Ovary (tissue), 10 donors: ENCODE measurements at regions of chr1 and their contacts with region 1.

Region 1: GRCh38 chr1:39102537-39103327 is 76.6 kb downstream of the NDUFS5 start:
- DNase-seq: peak in 2 of 5 donors; percentile 27 to 49
- H3K4me3 ChIP-seq: no peak overlapping the region
- H3K27ac ChIP-seq: no peak overlapping the region
- H3K4me1 ChIP-seq: peaks cover 9% of the 10 kb centered on the region
- H3K27me3 ChIP-seq: no peaks in the 10 kb centered on the region
- CTCF ChIP-seq: peak; percentile 53 to 91 (median 89)
- EP300 ChIP-seq: no peak
- POLR2A ChIP-seq: no peak

Region 2: GRCh38 chr1:38990738-38991639 is 111.7 kb before region 1 on chr1 and contains the start of gene AKIRIN1:
- intact Hi-C with region 1: no loop called
- DNase-seq: peak; percentile 98 to 99 (median 99)
- H3K4me3 ChIP-seq: peak within 1 kb of the TSS; percentile 99
- H3K27ac ChIP-seq: peak within 1 kb of the TSS; percentile 68 to 83
- H3K4me1 ChIP-seq: peaks cover 5% of the 10 kb centered on the region
- H3K27me3 ChIP-seq: no peaks in the 10 kb centered on the region
- CTCF ChIP-seq: peak in 2 of 3 donors; percentile 36 to 47
- EP300 ChIP-seq: no peak
- POLR2A ChIP-seq: peak; percentile 97
- total RNA-seq, gene AKIRIN1: 19.1 to 49.0 (median 42.4) TPM

Region 3: DNA sequence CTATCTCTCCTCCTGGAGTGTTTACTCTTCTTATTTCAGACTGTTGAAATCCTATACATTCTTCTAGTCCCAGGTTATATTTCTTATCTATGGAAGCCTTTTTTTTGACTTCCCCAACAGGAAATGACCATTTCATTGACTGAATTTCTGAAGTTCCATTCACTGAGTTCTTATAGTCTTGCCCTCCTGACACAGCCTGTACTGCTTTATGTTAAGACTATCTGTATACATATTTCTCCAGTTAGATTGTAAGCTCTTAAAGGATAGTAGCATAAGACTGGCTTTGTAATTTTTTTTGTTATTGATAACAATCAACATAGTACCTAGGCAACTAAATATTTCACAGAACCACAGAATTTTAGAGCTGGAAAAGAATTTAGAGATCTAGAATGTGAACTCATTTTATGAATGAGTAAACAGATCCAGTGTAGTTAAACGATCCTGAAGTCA is 86.9 kb after region 1 on chr1:
- intact Hi-C with region 1: loop called in 3 of 4 experiments (anchors 5 to 10 kb)
- DNase-seq: no peak
- H3K4me3 ChIP-seq: no peak overlapping the region
- H3K27ac ChIP-seq: no peak overlapping the region
- H3K4me1 ChIP-seq: peaks cover 2% of the 10 kb centered on the region
- H3K27me3 ChIP-seq: no peaks in the 10 kb centered on the region
- CTCF ChIP-seq: no peak
- EP300 ChIP-seq: no peak
- POLR2A ChIP-seq: no peak

Region 4: GRCh38 chr1:39204441-39205081 is 101.8 kb after region 1 on chr1 and contains the start of gene MACF1:
- intact Hi-C with region 1: loop called in 2 of 4 experiments (anchors 10 kb)
- DNase-seq: peak; percentile 77 to 87 (median 83)
- H3K4me3 ChIP-seq: peak within 1 kb of the TSS; percentile 48
- H3K27ac ChIP-seq: peak within 1 kb of the TSS; percentile 78 to 95
- H3K4me1 ChIP-seq: peaks cover 9% of the 10 kb centered on the region
- H3K27me3 ChIP-seq: no peaks in the 10 kb centered on the region
- CTCF ChIP-seq: peak in 2 of 3 donors; percentile 72 to 77
- EP300 ChIP-seq: no peak
- POLR2A ChIP-seq: peak; percentile 73
- total RNA-seq, gene MACF1: 212 to 331 (median 269) TPM

Region 5: GRCh38 chr1:39354572-39354971 is 251.8 kb after region 1 on chr1:
- intact Hi-C with region 1: loop called in 1 of 4 experiments (anchors 10 kb)
- DNase-seq: no peak
- H3K4me3 ChIP-seq: no peak overlapping the region
- H3K27ac ChIP-seq: no peak overlapping the region
- H3K4me1 ChIP-seq: no peaks in the 10 kb centered on the region
- H3K27me3 ChIP-seq: no peaks in the 10 kb centered on the region
- CTCF ChIP-seq: no peak
- EP300 ChIP-seq: no peak
- POLR2A ChIP-seq: no peak

Region 6: GRCh38 chr1:39538588-39539465 is 436.1 kb after region 1 on chr1:
- intact Hi-C with region 1: loop called in 3 of 4 experiments (anchors 10 kb)
- DNase-seq: peak; percentile 72 to 81 (median 73)
- H3K4me3 ChIP-seq: no peak overlapping the region
- H3K27ac ChIP-seq: no peak overlapping the region
- H3K4me1 ChIP-seq: no peaks in the 10 kb centered on the region
- H3K27me3 ChIP-seq: no peaks in the 10 kb centered on the region
- CTCF ChIP-seq: peak; percentile 77 to 93 (median 83)
- EP300 ChIP-seq: no peak
- POLR2A ChIP-seq: no peak